ENCODE measurements at regions of chr10 and their contacts with region 1.

Region 1: GRCh38 chr10:133245439-133246235 is 8.0 kb downstream of the VENTX start:
- DNase-seq: no peak
- H3K4me3 ChIP-seq: no peak overlapping the region
- H3K27ac ChIP-seq: no peak overlapping the region
- H3K4me1 ChIP-seq: peaks cover 0 to 15% (median 8%) of the 10 kb centered on the region in 4 experiments; a peak in 5 of 7 replicates
- H3K27me3 ChIP-seq: no peaks in the 10 kb centered on the region; a peak in 3 of 7 replicates
- CTCF ChIP-seq: no peak
- EP300 ChIP-seq: no peak
- POLR2A ChIP-seq: no peak
- RAD21 ChIP-seq: no peak

Region 2: DNA sequence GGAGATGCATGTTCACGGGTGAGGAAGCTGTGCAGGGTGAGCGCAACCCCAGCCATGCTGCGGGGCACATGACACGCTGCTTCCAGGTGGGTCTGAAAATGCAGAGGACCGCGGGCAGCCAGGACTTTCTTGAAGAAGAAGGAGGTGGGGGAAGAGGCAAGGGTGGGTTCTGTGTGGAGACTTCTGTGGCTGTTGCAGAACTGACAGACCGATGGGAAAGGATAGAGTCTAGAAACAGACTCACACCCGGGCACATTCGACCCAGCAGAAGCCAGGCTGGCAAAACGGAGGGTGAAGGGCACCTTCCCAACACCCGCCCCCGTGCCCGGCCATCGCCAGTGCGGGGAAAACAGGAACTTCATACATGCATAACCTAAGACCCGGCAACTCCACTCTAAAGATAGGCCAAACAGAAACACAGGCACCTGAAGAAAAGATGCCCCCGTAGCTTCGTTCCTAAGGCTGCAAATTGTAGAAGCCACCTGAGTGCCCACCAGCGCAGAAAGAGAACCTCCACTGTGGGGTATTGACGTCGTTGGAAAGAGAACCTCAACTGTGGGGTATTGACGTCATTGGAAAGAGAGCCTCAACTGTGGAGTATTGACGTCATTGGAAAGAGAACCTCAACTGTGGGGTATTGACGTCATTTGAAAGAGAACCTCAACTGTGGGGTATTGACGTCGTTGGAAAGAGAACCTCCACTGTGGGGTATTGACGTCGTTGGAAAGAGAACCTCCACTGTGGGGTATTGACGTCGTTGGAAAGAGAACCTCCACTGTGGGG is 90.5 kb before region 1 on chr10:
- CTCF ChIA-PET with region 1: no interaction called
- POLR2A ChIA-PET with region 1: no interaction called
- DNase-seq: no peak
- H3K4me3 ChIP-seq: no peak overlapping the region
- H3K27ac ChIP-seq: no peak overlapping the region
- H3K4me1 ChIP-seq: peaks cover 8 to 31% (median 11%) of the 10 kb centered on the region in 4 experiments
- H3K27me3 ChIP-seq: 0 out of 7 replicates have a peak, but pooled peaks cover 0 to 2% (median 0%) of the 10 kb centered on the region in 4 experiments
- CTCF ChIP-seq: no peak
- EP300 ChIP-seq: no peak
- POLR2A ChIP-seq: no peak
- RAD21 ChIP-seq: no peak

Region 3: DNA sequence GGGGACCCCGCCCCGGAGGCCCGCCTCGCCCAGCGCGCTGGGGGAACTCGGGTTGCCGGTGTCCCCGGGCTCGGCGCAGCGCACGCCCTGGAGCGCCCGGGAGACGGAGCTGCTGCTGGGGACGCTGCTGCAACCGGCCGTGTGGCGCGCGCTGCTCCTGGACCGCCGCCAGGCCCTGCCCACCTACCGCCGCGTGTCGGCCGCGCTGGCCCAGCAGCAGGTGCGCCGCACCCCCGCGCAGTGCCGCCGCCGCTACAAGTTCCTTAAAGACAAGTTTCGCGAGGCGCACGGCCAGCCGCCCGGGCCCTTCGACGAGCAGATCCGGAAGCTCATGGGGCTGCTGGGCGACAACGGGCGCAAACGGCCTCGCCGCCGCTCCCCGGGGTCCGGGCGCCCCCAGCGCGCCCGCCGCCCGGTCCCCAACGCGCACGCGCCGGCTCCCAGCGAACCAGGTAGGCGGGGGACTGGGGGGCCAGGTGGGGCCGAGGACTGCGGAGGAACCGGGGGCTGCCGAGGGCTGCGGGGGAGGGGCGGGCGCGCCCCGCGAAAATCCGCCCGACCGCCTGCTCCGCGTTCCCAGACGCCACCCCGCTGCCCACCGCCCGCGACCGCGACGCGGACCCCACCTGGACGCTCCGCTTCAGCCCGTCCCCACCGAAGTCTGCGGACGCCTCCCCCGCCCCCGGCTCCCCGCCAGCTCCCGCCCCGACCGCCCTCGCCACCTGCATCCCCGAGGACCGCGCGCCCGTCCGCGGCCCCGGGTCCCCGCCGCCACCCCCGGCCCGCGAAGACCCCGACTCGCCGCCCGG is 15.0 kb before region 1 on chr10:
- CTCF ChIA-PET with region 1: interaction called, 11 read pairs
- POLR2A ChIA-PET with region 1: interaction called, 5 read pairs
- DNase-seq: no peak
- H3K4me3 ChIP-seq: peak overlapping the region; percentile 20 to 63 (median 38); a peak in 6 of 8 replicates
- H3K27ac ChIP-seq: no peak overlapping the region
- H3K4me1 ChIP-seq: peaks cover 0 to 28% (median 12%) of the 10 kb centered on the region in 4 experiments; a peak in 6 of 7 replicates
- H3K27me3 ChIP-seq: peaks cover 22 to 39% (median 36%) of the 10 kb centered on the region in 4 experiments
- CTCF ChIP-seq: no peak
- EP300 ChIP-seq: no peak
- POLR2A ChIP-seq: no peak
- RAD21 ChIP-seq: no peak

Region 4: GRCh38 chr10:133267829-133268228 is 22.2 kb after region 1 on chr10:
- CTCF ChIA-PET with region 1: interaction called, 15 read pairs
- POLR2A ChIA-PET with region 1: interaction called, 3 read pairs
- DNase-seq: no peak
- H3K4me3 ChIP-seq: no peak overlapping the region
- H3K27ac ChIP-seq: no peak overlapping the region
- H3K4me1 ChIP-seq: peaks cover 0 to 3% (median 0%) of the 10 kb centered on the region in 4 experiments; a peak in 4 of 7 replicates
- H3K27me3 ChIP-seq: peaks cover 0 to 7% (median 3%) of the 10 kb centered on the region in 4 experiments; a peak in 5 of 7 replicates
- CTCF ChIP-seq: peak in 2 of 3 experiments; percentile 11 to 29; a peak in 3 of 4 replicates
- EP300 ChIP-seq: no peak
- POLR2A ChIP-seq: no peak
- RAD21 ChIP-seq: peak; percentile 35 to 60; a peak in 3 of 4 replicates

Region 5: DNA sequence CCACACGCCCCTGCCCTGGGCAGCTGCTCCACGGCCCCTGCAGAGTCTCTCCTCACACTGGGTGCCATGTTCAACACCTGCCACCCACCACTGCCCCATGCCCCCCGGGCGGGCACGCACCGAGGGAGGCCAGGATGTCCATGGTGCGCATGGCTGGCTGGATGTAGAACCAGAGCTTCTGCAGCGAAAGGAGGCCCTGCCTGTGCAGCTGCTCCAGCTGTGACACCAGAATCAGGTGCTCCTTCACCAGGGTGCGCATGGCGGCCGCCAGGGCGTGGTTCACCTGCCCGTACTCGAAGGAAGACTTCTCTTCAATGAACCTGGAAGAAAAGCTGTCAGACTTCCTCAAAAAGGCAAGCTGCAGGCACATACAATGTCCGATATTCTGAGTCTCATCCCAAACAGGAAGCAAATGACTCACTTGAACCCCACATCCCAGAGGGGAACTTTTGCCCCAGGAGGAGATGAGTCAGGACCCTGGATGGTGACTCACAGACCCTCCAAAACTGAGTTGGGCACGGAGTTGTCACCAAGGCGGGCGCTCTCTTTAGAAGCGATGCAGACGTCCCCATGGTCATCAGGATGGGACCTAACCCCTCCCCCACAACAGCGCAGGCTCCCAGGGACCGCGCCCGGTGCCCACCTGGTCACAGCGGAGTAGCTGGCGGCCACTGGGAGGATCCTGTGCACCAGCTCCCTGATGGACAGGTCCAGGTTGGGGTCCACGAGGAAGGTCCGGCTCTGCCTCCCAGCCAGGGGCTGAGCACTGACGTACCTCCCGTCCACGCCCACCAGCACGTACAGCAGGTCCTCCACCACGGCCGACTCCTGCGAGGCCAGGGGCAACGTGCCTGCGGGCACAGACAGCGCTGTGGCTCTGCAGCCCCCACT is 47.5 kb after region 1 on chr10:
- CTCF ChIA-PET with region 1: no interaction called
- POLR2A ChIA-PET with region 1: no interaction called
- DNase-seq: no peak
- H3K4me3 ChIP-seq: no peak overlapping the region
- H3K27ac ChIP-seq: no peak overlapping the region
- H3K4me1 ChIP-seq: no peaks in the 10 kb centered on the region
- H3K27me3 ChIP-seq: no peaks in the 10 kb centered on the region
- CTCF ChIP-seq: no peak
- EP300 ChIP-seq: no peak
- POLR2A ChIP-seq: no peak
- RAD21 ChIP-seq: no peak

Region 6: GRCh38 chr10:133373104-133373624 is 127.5 kb after region 1 on chr10 and contains the start of gene ECHS1:
- CTCF ChIA-PET with region 1: no interaction called
- POLR2A ChIA-PET with region 1: no interaction called
- DNase-seq: peak; percentile 73 to 99
- H3K4me3 ChIP-seq: peak within 1 kb of the TSS; percentile 66 to 97 (median 73)
- H3K27ac ChIP-seq: no peak within 1 kb of the TSS
- H3K4me1 ChIP-seq: peaks cover 0 to 2% (median 0%) of the 10 kb centered on the region in 4 experiments; a peak in 5 of 7 replicates
- H3K27me3 ChIP-seq: peaks cover 8 to 33% (median 25%) of the 10 kb centered on the region in 4 experiments
- CTCF ChIP-seq: no peak
- EP300 ChIP-seq: no peak
- POLR2A ChIP-seq: peak in 1 of 2 experiments; percentile 82; a peak in 2 of 3 replicates
- RAD21 ChIP-seq: no peak
- total RNA-seq, gene ECHS1: 101 and 108 TPM in 2 replicates